SK-N-SH (cell line): ENCODE measurements at regions of chr20 and their contacts with region 1.

Region 1: DNA sequence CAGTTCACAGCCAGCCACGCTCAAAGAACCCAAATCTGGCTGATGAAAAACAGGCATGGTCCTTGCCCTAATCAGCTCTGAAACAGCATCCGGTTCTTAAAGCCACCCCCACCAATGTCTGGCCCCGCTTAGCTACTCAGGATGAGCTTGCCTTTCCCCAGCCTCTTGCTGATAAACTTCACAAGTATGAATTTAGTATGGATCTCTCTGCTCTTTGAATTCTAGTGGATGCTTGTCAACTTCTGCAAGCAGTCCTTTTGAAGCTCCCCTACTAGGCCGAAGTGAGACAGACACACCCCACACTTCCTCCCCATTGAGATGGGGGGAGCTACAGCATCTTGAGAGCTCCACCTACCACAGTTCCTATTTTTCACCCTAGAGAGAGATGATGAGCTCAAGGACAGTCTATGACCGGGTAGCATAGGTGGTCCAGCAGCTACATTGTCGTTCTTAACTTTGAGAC is 36.7 kb downstream of the EBF4 start:
- DNase-seq: peak; percentile 57
- H3K4me3 ChIP-seq: no peak overlapping the region
- H3K27ac ChIP-seq: peak overlapping the region in 1 of 2 experiments; percentile 65; a peak in 2 of 4 replicates
- H3K4me1 ChIP-seq: peaks cover 0 to 16% of the 10 kb centered on the region in 2 experiments; a peak in 2 of 4 replicates
- H3K27me3 ChIP-seq: no peaks in the 10 kb centered on the region
- CTCF ChIP-seq: no peak
- EP300 ChIP-seq: no peak
- RAD21 ChIP-seq: no peak

Region 2: DNA sequence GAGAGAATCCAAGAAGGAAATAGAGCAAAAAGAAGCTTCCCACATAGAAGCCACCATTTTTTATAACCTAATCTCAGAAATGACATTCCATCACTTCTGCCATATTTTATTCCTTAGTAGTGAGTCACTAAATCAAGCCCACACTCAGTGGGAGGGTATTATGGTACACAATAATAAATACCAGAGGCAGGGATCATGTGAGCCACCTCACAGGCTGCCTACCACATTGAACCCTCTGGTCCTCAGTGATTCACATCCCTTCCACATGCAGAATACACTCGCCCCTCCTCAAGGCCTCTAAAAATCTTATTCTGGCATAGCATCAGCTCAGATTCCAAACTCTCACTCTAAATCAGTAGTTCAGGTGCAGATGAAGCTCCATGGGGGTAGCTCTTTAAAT is 143.5 kb before region 1 on chr20:
- CTCF ChIA-PET with region 1: no interaction called
- POLR2A ChIA-PET with region 1: no interaction called
- DNase-seq: no peak
- H3K4me3 ChIP-seq: no peak overlapping the region
- H3K27ac ChIP-seq: no peak overlapping the region
- H3K4me1 ChIP-seq: no peaks in the 10 kb centered on the region
- H3K27me3 ChIP-seq: no peaks in the 10 kb centered on the region
- CTCF ChIP-seq: no peak
- EP300 ChIP-seq: no peak
- RAD21 ChIP-seq: no peak

Region 3: DNA sequence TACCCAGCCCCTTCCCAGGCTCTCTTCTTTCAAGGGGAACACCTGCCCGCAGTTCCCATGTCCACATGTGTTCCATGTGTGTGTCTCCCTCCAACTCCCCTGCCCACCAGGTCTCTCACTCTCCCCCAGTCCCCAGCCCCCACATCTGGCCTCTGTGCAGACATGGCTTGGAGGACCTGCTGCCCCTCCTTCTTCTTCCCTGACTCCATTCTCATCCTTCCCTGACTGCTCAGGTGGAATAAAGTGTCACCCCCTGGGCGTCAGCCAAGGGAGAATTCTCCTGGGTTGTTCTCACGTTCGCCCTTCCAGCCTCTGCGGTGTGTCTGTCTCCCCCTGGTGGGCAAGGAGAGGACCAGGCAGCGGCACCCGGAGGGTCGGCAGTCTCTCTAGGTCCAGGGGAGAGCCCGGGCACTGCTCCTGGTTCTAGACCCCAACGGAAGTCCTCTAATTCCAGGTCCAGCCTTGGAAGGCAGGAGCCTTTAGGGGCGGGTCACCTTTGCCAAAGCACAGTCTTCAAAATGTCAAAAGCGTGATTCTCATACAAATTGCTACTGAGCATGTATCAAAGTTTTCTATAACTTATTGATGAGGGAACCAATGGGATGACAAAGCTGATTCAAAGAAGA is 13.8 kb after region 1 on chr20:
- CTCF ChIA-PET with region 1: interaction called, 12 read pairs
- POLR2A ChIA-PET with region 1: no interaction called
- DNase-seq: peak; percentile 82
- H3K4me3 ChIP-seq: no peak overlapping the region
- H3K27ac ChIP-seq: no peak overlapping the region
- H3K4me1 ChIP-seq: no peaks in the 10 kb centered on the region
- H3K27me3 ChIP-seq: no peaks in the 10 kb centered on the region
- CTCF ChIP-seq: peak; percentile 73
- EP300 ChIP-seq: no peak
- RAD21 ChIP-seq: peak; percentile 59

Region 4: GRCh38 chr20:2767768-2768631 is 38.7 kb after region 1 on chr20:
- CTCF ChIA-PET with region 1: no interaction called
- POLR2A ChIA-PET with region 1: no interaction called
- DNase-seq: peak; percentile 14
- H3K4me3 ChIP-seq: no peak overlapping the region
- H3K27ac ChIP-seq: no peak overlapping the region
- H3K4me1 ChIP-seq: 0 out of 4 replicates have a peak, but pooled peaks cover 0 to 5% of the 10 kb centered on the region in 2 experiments
- H3K27me3 ChIP-seq: no peaks in the 10 kb centered on the region
- CTCF ChIP-seq: no peak
- EP300 ChIP-seq: no peak
- RAD21 ChIP-seq: no peak

Region 5: DNA sequence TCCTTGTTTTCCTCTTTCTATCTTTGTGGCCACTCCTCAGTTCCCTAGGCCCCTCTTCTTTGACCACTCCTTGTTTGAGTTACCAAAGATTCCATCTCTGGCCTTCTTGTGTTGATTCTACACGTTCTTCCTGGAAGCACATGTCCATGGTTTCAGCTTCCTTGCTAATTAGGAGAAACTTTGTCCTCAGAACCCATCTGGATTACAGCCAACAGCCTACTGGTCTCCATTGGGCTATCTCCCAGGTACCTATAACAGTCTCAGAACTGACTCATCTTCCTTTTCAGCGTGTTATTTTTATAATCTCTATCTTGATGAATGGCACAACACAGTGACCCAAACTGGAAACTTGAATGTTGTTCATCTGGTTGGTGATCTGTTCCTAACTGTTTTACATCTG is 161.5 kb after region 1 on chr20:
- CTCF ChIA-PET with region 1: no interaction called
- POLR2A ChIA-PET with region 1: no interaction called
- DNase-seq: no peak
- H3K4me3 ChIP-seq: no peak overlapping the region
- H3K27ac ChIP-seq: peak overlapping the region; percentile 18 to 45; a peak in 2 of 4 replicates
- H3K4me1 ChIP-seq: no peaks in the 10 kb centered on the region; a peak in 1 of 4 replicates
- H3K27me3 ChIP-seq: no peaks in the 10 kb centered on the region
- CTCF ChIP-seq: no peak
- EP300 ChIP-seq: no peak
- RAD21 ChIP-seq: no peak